ENCODE measurements at regions of chr14 and their contacts with region 1.

Region 1: DNA sequence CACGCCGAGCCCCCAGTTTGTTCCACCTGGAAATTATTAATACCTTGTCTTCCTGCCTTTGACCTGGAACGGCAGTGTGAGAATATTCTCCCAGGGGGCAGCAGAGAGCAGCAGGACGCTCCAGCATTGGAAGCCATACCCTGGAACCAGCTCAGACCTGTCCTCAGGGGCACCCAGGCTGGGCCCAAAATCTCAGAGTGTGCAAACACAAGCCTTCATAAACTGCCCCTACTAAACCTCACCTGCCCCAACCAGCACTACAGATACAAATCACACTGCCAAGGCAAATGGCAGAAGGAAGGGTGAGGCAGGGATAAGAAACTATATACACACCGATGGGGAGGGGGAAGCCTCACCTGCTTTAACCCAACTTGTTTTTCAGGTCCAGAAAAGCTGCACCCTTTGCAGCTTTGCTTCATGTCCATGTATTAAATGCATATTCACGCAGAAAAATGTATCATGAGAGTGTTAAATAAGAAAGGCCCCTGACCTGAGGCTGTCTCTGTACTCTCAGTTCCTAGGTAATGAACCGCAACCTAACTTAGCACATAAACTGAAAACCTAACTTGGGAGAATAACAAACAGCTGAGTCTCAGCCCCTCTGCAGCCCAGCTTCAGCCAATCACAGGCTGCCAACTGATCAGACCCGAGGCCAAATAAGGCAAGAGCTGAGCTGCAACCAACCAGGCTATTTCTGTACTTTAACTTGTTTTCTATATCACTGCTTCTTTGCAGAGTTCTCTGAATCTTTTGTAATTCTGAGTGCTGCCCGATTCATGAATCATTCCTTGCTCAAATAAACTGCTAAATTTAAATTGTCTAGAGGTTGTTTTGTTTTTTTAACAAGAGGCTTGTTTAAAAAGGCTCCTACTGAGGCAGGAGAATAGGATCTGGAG is 130.1 kb downstream of the SPTSSA start:
- DNase-seq: peak; percentile 77
- ATAC-seq: peak; percentile 80
- H3K4me3 Mint-ChIP-seq: no peak overlapping the region
- H3K27ac Mint-ChIP-seq: no peak overlapping the region
- H3K4me1 Mint-ChIP-seq: peaks cover 1% of the 10 kb centered on the region
- H3K27me3 Mint-ChIP-seq: no peaks in the 10 kb centered on the region
- CTCF ChIP-seq: peak; percentile 88

Region 2: DNA sequence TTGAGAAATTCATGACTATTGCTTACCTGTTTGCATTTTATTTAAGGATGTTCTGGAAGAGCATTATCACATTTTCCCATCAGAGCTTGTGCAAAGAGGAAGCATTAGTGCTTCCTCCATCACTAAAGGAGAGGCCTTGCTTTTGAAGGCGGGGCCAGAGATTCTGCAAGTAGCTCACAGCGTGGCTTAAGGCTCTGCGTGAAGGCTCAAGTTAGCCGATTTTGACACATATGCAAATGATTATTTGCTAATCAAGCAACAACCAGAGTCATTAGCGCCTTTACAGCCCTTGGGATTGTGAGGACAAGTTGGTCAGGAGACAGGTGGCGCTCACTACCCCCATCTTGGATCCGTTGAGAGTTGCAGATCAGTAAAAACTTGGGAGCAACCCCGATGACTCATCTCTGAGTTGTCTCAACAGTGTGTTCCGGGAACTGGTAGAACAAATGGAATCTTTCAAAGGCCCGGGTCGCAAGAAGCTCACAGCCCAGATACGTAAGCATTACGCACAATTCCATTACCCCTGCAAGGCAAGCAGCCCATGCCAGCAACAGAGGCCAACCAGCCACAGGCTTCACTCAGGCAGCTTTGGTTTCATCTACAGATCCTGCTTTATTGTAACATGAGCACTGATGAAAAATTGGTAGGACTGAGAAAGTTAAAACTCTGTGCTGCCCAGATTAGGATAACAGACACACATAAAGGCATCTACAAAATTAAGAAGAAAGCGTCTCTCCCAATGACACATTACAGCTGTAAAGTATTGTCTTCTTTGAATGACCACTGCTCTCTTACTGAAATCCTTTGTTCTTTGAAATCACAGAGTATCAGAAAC is 164.9 kb after region 1 on chr14:
- CTCF ChIA-PET with region 1: interaction called, 12 read pairs
- POLR2A ChIA-PET with region 1: no interaction called
- intact Hi-C with region 1: loop called (anchors 10 kb)
- DNase-seq: no peak
- ATAC-seq: no peak
- H3K4me3 Mint-ChIP-seq: no peak overlapping the region
- H3K27ac Mint-ChIP-seq: no peak overlapping the region
- H3K4me1 Mint-ChIP-seq: no peaks in the 10 kb centered on the region
- H3K27me3 Mint-ChIP-seq: no peaks in the 10 kb centered on the region
- CTCF ChIP-seq: no peak

Measured in activated CD8-positive, alpha-beta T cell treated with anti-CD3 and anti-CD28 coated beads for 36 hours (primary cell).